ENCODE measurements at regions of chr21 and their contacts with region 1.

Region 1: DNA sequence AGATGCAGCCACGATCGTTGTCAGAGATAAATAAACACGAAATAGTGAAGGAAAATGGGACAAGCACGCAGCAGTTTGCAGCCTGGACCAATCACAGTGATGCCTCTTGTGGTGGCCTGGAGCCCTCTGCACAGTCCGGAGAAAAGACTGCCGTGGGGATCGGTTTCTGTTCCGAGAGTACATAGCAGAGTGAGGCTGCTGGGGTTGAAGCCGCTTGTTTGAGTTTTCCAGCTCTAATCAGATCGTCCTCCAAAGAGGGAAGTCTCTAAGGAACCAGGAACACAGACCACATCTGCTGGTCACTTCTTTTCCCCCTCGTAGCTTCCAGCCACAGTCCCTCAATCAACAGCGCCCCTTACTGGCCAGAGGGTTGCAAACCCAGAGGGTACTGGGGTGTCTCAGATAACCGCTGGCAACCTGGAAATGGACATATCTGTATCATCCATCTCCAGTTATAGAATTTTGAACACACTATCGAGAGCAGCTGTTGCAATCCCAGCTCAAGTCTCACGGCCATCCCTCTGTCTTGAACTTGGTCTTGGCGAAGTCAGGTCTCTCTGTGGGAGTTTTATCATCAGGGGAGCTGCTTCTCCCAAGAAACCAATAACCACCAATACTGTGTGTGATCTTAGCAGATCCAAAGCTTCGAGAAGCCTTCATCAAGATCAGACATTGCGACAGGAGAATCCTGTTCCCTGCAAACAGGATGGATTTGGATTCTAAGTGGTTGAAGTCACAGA is 57.4 kb downstream of the OLIG1 start:
- DNase-seq: peak; percentile 28 to 75 (median 50)
- ATAC-seq: peak; percentile 60
- H3K4me3 ChIP-seq: peak overlapping the region; percentile 40
- H3K4me3 Mint-ChIP-seq: peak overlapping the region; percentile 77
- H3K27ac ChIP-seq: no peak overlapping the region
- H3K27ac Mint-ChIP-seq: no peak overlapping the region
- H3K4me1 ChIP-seq: peaks cover 7% of the 10 kb centered on the region
- H3K4me1 Mint-ChIP-seq: peaks cover 14% of the 10 kb centered on the region
- H3K27me3 ChIP-seq: peaks cover 0 to 3% of the 10 kb centered on the region in 2 experiments
- H3K27me3 Mint-ChIP-seq: peaks cover 30% of the 10 kb centered on the region
- CTCF ChIP-seq: peak; percentile 73

Region 2: DNA sequence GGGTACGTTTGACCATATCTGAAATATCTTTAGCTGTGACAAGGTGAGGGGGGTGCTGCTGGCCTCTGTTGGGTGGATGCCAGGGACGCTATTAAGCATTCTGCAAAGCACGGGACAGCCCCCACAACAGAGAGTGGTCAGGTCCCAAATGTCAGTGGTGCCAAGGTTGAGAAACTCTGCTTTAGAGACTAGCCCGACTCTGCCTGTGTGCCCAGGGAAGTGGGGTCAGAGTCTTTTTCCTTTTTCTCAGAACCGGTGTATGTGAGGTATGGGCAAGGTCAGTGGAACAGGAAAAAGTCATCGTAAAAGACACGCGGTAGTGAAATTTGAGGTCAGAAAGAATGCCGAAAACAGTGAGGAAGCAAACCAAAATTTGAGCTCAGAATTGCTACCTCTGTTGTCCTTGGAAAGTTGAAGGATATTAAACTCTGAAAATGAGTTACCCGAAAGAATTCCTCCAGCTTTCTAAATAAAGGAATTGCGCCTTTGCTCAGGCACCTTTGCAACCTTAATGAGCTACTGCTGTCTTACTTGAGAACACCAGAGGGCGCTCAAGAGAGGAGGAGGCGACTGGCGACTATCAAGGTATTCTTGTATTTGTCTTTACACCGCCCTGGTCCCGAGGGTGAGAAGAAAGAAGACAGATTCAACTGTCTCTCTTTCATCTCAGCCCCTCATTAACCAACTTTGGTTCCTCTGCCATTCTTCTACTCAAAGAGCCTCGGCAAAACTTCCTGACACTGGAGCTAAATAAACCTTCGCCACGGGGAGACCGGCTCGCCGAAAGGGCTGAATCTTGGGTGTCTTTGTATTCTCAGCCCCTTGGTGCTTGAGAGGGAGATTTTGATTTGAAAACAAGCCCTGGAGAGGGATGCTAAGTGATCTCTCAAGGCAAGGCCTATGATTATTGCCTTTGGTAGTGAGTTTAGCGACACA is 187.0 kb before region 1 on chr21:
- CTCF ChIA-PET with region 1: interaction called, 5 read pairs
- POLR2A ChIA-PET with region 1: interaction called, 3 read pairs
- intact Hi-C with region 1: loop called (anchors 5 kb)
- DNase-seq: peak in 12 of 14 experiments; percentile 7 to 79 (median 20)
- ATAC-seq: peak; percentile 61
- H3K4me3 ChIP-seq: no peak overlapping the region
- H3K4me3 Mint-ChIP-seq: no peak overlapping the region
- H3K27ac ChIP-seq: no peak overlapping the region
- H3K27ac Mint-ChIP-seq: no peak overlapping the region
- H3K4me1 ChIP-seq: no peaks in the 10 kb centered on the region
- H3K4me1 Mint-ChIP-seq: no peaks in the 10 kb centered on the region
- H3K27me3 ChIP-seq: no peaks in the 10 kb centered on the region
- H3K27me3 Mint-ChIP-seq: no peaks in the 10 kb centered on the region
- CTCF ChIP-seq: peak; percentile 82

Region 3: DNA sequence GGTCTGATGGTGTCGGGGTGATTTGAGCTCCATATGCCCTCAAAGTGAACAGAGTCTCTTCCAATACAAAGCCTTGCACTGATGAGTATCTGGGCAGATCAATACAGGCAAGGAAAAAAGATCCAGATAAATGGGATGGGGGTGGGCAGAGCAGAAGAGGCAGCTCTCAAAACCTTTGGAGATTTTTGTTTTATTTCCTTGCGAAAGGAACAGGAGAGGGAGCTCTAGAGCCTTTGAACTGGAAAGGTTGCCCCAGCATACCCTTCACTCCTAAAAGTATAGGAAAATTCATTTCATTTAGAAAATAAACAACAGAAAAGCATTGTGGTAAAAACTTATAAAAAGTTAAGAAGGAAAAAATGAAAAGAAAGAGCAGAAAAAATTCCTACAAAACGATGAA is 133.0 kb before region 1 on chr21:
- CTCF ChIA-PET with region 1: no interaction called
- POLR2A ChIA-PET with region 1: no interaction called
- intact Hi-C with region 1: loop called in 1 of 2 experiments (anchors 2 kb)
- DNase-seq: peak in 2 of 14 experiments; percentile 25 to 27
- ATAC-seq: no peak
- H3K4me3 ChIP-seq: no peak overlapping the region
- H3K4me3 Mint-ChIP-seq: no peak overlapping the region
- H3K27ac ChIP-seq: no peak overlapping the region
- H3K27ac Mint-ChIP-seq: no peak overlapping the region
- H3K4me1 ChIP-seq: no peaks in the 10 kb centered on the region
- H3K4me1 Mint-ChIP-seq: no peaks in the 10 kb centered on the region
- H3K27me3 ChIP-seq: peaks cover 3 to 4% of the 10 kb centered on the region in 2 experiments
- H3K27me3 Mint-ChIP-seq: peaks cover 31% of the 10 kb centered on the region
- CTCF ChIP-seq: peak; percentile 56

Region 4: GRCh38 chr21:33149181-33149580 is 21.9 kb after region 1 on chr21:
- CTCF ChIA-PET with region 1: no interaction called
- POLR2A ChIA-PET with region 1: no interaction called
- intact Hi-C with region 1: no loop called
- DNase-seq: no peak
- ATAC-seq: no peak
- H3K4me3 ChIP-seq: no peak overlapping the region
- H3K4me3 Mint-ChIP-seq: no peak overlapping the region
- H3K27ac ChIP-seq: no peak overlapping the region
- H3K27ac Mint-ChIP-seq: no peak overlapping the region
- H3K4me1 ChIP-seq: peaks cover 5% of the 10 kb centered on the region
- H3K4me1 Mint-ChIP-seq: peaks cover 8% of the 10 kb centered on the region
- H3K27me3 ChIP-seq: peaks cover 5 to 9% of the 10 kb centered on the region in 2 experiments
- H3K27me3 Mint-ChIP-seq: peaks cover 18% of the 10 kb centered on the region
- CTCF ChIP-seq: no peak

Measured in CD4-positive, alpha-beta T cell (primary cell).